Activated T-helper 2 cell treated with anti-CD3 and anti-CD28 coated beads, Interferon-gamma antibody, Interleukin-2, Interleukin-4, amounts not matched to agents 10 μg/mL and 5 μg/mL and 100 μg/mL, durations not matched to agents 14 hours and 24 hours and 36 hours (primary cell): ENCODE measurements at regions of chr4 and their contacts with region 1.

Region 1: GRCh38 chr4:6180841-6181631 is 19.3 kb downstream of the JAKMIP1 start:
- DNase-seq: peak; percentile 70
- H3K4me3 Mint-ChIP-seq: peak overlapping the region; percentile 37
- H3K27ac Mint-ChIP-seq: peak overlapping the region; percentile 93
- H3K4me1 Mint-ChIP-seq: peaks cover 73% of the 10 kb centered on the region
- H3K27me3 Mint-ChIP-seq: no peaks in the 10 kb centered on the region

Region 2: DNA sequence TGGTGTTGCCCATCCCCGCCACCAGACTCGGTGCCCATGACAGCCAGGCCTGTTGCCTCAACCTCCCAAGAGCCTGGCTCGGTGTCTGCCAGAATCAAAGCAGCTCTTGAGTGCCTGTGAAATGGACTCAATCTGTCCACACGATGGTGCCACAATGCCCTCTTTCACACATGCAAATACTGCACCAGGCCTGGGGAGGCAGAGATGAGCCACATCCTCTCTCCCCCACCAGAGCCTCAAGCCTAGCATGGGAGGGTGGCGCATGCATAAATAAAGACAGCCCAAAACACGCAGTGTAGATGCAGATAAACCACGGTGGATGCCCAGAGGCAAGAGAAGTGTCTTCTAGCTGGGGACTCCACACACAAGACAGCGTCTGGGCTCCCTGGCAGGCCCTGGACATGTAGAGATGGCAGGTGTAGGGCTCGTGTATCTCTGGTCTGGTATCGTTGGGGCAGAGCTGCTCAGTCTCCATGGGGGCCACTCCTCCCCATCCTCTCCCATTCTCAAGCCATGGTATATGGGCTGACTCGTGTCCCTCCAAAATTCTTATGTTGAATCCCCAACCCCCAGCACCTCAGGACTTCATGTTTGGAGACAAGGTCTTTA is 46.3 kb before region 1 on chr4:
- intact Hi-C with region 1: loop called (anchors 5 kb)
- DNase-seq: peak; percentile 33
- H3K4me3 Mint-ChIP-seq: no peak overlapping the region
- H3K27ac Mint-ChIP-seq: no peak overlapping the region
- H3K4me1 Mint-ChIP-seq: peaks cover 18% of the 10 kb centered on the region
- H3K27me3 Mint-ChIP-seq: no peaks in the 10 kb centered on the region

Region 3: GRCh38 chr4:6198768-6199421 is 17.9 kb after region 1 on chr4:
- intact Hi-C with region 1: loop called (anchors 1 kb)
- DNase-seq: no peak
- H3K4me3 Mint-ChIP-seq: peak overlapping the region; percentile 84
- H3K27ac Mint-ChIP-seq: peak overlapping the region; percentile 38
- H3K4me1 Mint-ChIP-seq: peaks cover 34% of the 10 kb centered on the region
- H3K27me3 Mint-ChIP-seq: peaks cover 17% of the 10 kb centered on the region